CD8-positive, alpha-beta T cell (primary cell): ENCODE measurements at regions of chr16 and their contacts with region 1.

Region 1: GRCh38 chr16:69132424-69133252 is at the starts of genes CHTF8 and UTP4:
- DNase-seq: peak; percentile 69 to 91 (median 87)
- ATAC-seq: peak; percentile 85
- H3K4me3 ChIP-seq: peak within 1 kb of the TSS; percentile 92 to 98
- H3K4me3 Mint-ChIP-seq: peak within 1 kb of the TSS; percentile 94
- H3K27ac ChIP-seq: peak within 1 kb of the TSS; percentile 77 to 90
- H3K27ac Mint-ChIP-seq: peak within 1 kb of the TSS; percentile 95
- H3K4me1 ChIP-seq: peaks cover 26% of the 10 kb centered on the region
- H3K4me1 Mint-ChIP-seq: peaks cover 65% of the 10 kb centered on the region
- H3K27me3 ChIP-seq: no peaks in the 10 kb centered on the region
- H3K27me3 Mint-ChIP-seq: no peaks in the 10 kb centered on the region
- CTCF ChIP-seq: no peak
- total RNA-seq, gene CHTF8: 26.2 to 28.8 TPM
- total RNA-seq, gene UTP4: 45.8 to 48.7 TPM

Region 2: GRCh38 chr16:68244903-68245853 is 887.5 kb before region 1 on chr16 and contains the start of gene PLA2G15:
- CTCF ChIA-PET with region 1: no interaction called
- POLR2A ChIA-PET with region 1: no interaction called
- intact Hi-C with region 1: loop called in 1 of 2 experiments (anchors 5 kb)
- DNase-seq: peak; percentile 94 to 98 (median 96)
- ATAC-seq: peak; percentile 99
- H3K4me3 ChIP-seq: peak within 1 kb of the TSS; percentile 88 to 91
- H3K4me3 Mint-ChIP-seq: peak within 1 kb of the TSS; percentile 98
- H3K27ac ChIP-seq: peak within 1 kb of the TSS in 1 of 2 experiments; percentile 38
- H3K27ac Mint-ChIP-seq: peak within 1 kb of the TSS; percentile 79
- H3K4me1 ChIP-seq: peaks cover 21% of the 10 kb centered on the region
- H3K4me1 Mint-ChIP-seq: peaks cover 26% of the 10 kb centered on the region
- H3K27me3 ChIP-seq: no peaks in the 10 kb centered on the region
- H3K27me3 Mint-ChIP-seq: no peaks in the 10 kb centered on the region
- CTCF ChIP-seq: no peak
- total RNA-seq, gene PLA2G15: 5.1 to 6.0 TPM

Region 3: DNA sequence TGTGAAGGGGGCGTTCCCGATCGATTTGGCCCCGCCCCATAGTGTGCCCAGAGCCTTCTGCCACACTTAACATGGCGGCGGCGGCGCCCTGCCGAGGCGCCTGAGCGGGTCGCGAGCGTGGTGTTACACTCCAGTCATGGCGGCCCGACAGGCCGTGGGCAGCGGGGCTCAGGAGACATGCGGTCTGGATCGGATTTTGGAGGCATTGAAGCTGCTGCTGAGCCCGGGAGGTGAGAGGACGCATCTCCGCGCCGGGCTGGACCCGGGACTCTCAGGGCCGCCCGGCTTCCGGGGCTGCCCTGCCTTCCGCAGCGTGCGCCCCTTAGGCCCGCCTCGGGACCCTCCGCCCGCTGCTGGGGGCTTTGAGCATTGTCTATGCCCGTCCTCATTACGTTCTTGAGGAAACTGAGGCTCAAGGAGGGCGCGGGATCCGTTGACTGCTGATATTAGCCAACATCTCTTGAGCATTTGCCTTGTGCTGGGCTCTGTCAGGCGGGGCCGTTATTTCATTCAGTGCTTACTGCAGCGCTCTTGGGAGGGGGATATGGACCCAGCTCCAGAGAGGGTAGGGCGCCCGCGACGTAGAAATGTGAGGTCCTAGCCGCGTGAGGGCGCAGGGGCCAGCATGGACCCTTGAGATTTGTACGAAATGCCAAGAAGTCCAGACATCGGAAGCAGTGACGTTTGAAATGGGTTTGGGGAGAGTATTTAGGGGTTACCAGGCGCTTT is 289.0 kb before region 1 on chr16 and contains the start of gene TANGO6:
- CTCF ChIA-PET with region 1: no interaction called
- POLR2A ChIA-PET with region 1: no interaction called
- intact Hi-C with region 1: loop called in 1 of 2 experiments (anchors 1 kb)
- DNase-seq: peak; percentile 81 to 93 (median 90)
- ATAC-seq: peak; percentile 95
- H3K4me3 ChIP-seq: peak within 1 kb of the TSS; percentile 86 to 94
- H3K4me3 Mint-ChIP-seq: peak within 1 kb of the TSS; percentile 92
- H3K27ac ChIP-seq: peak within 1 kb of the TSS; percentile 78 to 86
- H3K27ac Mint-ChIP-seq: peak within 1 kb of the TSS; percentile 89
- H3K4me1 ChIP-seq: peaks cover 24% of the 10 kb centered on the region
- H3K4me1 Mint-ChIP-seq: peaks cover 29% of the 10 kb centered on the region
- H3K27me3 ChIP-seq: no peaks in the 10 kb centered on the region
- H3K27me3 Mint-ChIP-seq: no peaks in the 10 kb centered on the region
- CTCF ChIP-seq: no peak
- total RNA-seq, gene TANGO6: 12.1 to 16.3 TPM

Region 4: GRCh38 chr16:69330286-69331109 is 197.9 kb after region 1 on chr16 and contains the start of gene PDF:
- CTCF ChIA-PET with region 1: no interaction called
- POLR2A ChIA-PET with region 1: no interaction called
- intact Hi-C with region 1: loop called in 1 of 2 experiments (anchors 2 kb)
- DNase-seq: peak in 8 of 9 experiments; percentile 79 to 91 (median 82)
- ATAC-seq: peak; percentile 91
- H3K4me3 ChIP-seq: peak within 1 kb of the TSS; percentile 53 to 83
- H3K4me3 Mint-ChIP-seq: peak within 1 kb of the TSS; percentile 79
- H3K27ac ChIP-seq: peak within 1 kb of the TSS; percentile 60 to 75
- H3K27ac Mint-ChIP-seq: peak within 1 kb of the TSS; percentile 74
- H3K4me1 ChIP-seq: peaks cover 43% of the 10 kb centered on the region
- H3K4me1 Mint-ChIP-seq: peaks cover 52% of the 10 kb centered on the region
- H3K27me3 ChIP-seq: no peaks in the 10 kb centered on the region
- H3K27me3 Mint-ChIP-seq: no peaks in the 10 kb centered on the region
- CTCF ChIP-seq: no peak
- total RNA-seq, gene PDF: 3.3 to 3.6 TPM

Region 5: DNA sequence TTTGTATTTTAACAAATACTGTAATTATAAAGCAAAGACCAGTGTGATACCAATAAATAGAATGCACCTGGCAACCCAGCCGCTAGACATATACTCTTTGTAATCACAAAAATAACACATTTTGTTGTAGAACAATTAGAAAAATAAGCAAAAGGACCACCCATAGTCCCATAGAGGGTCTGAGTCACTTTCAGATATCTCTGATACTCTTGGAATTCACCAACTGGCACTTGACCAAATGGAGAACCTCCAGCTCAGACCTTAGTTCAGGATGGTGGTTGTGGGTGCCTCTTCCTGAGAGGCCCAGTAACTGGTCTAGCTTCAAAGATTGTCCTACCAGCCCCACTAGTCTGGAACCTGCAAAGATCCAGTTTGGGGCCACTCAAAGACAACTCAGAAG is 254.0 kb after region 1 on chr16:
- CTCF ChIA-PET with region 1: no interaction called
- POLR2A ChIA-PET with region 1: no interaction called
- intact Hi-C with region 1: loop called in 1 of 2 experiments (anchors 1 kb)
- DNase-seq: no peak
- ATAC-seq: no peak
- H3K4me3 ChIP-seq: peak overlapping the region in 1 of 2 experiments; percentile 46
- H3K4me3 Mint-ChIP-seq: peak overlapping the region; percentile 89
- H3K27ac ChIP-seq: peak overlapping the region in 1 of 2 experiments; percentile 55
- H3K27ac Mint-ChIP-seq: no peak overlapping the region
- H3K4me1 ChIP-seq: peaks cover 12% of the 10 kb centered on the region
- H3K4me1 Mint-ChIP-seq: peaks cover 30% of the 10 kb centered on the region
- H3K27me3 ChIP-seq: no peaks in the 10 kb centered on the region
- H3K27me3 Mint-ChIP-seq: no peaks in the 10 kb centered on the region
- CTCF ChIP-seq: no peak

Region 6: GRCh38 chr16:69761983-69762813 is 629.6 kb after region 1 on chr16 and contains the start of gene WWP2:
- CTCF ChIA-PET with region 1: no interaction called
- POLR2A ChIA-PET with region 1: interaction called, 3 read pairs
- intact Hi-C with region 1: loop called in 1 of 2 experiments (anchors 2 kb)
- DNase-seq: peak; percentile 54 to 92 (median 77)
- ATAC-seq: peak; percentile 81
- H3K4me3 ChIP-seq: peak within 1 kb of the TSS; percentile 91 to 100
- H3K4me3 Mint-ChIP-seq: peak within 1 kb of the TSS; percentile 94
- H3K27ac ChIP-seq: peak within 1 kb of the TSS; percentile 97 to 99
- H3K27ac Mint-ChIP-seq: peak within 1 kb of the TSS; percentile 98
- H3K4me1 ChIP-seq: peaks cover 17% of the 10 kb centered on the region
- H3K4me1 Mint-ChIP-seq: peaks cover 31% of the 10 kb centered on the region
- H3K27me3 ChIP-seq: no peaks in the 10 kb centered on the region
- H3K27me3 Mint-ChIP-seq: no peaks in the 10 kb centered on the region
- CTCF ChIP-seq: no peak
- total RNA-seq, gene WWP2: 36.7 to 36.9 TPM